Activated CD8-positive, alpha-beta memory T cell treated with anti-CD3 and anti-CD28 coated beads, Interleukin-2, amount 10 ng/mL, durations not matched to agents 7 days and 5 days (primary cell): ENCODE measurements at regions of chr5 and their contacts with region 1.

Region 1: GRCh38 chr5:157471709-157472108 is 11.7 kb downstream of the NIPAL4 start:
- DNase-seq: no peak
- ATAC-seq: peak; percentile 50
- H3K4me3 Mint-ChIP-seq: no peak overlapping the region
- H3K27ac Mint-ChIP-seq: no peak overlapping the region
- H3K4me1 Mint-ChIP-seq: no peaks in the 10 kb centered on the region
- H3K27me3 Mint-ChIP-seq: no peaks in the 10 kb centered on the region

Region 2: DNA sequence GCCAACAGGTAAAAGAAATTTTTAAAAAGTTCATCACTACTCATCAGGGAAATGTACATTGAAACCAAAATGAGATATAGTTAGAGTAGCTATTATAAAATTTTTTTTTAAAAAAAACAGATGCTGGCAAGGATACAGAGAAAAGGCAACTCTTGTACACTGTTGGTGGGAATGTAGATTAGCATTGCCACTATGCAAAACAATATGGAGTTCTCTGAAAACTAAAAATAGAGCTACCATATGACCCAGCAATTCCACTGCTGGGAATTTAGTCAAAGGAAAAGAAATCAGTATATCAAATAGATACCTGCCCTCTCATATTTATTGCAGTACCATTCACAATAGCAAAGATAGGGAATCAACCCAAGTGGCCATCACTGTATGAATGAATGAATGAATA is 55.9 kb before region 1 on chr5:
- CTCF ChIA-PET with region 1: no interaction called
- DNase-seq: no peak
- ATAC-seq: no peak
- H3K4me3 Mint-ChIP-seq: no peak overlapping the region
- H3K27ac Mint-ChIP-seq: no peak overlapping the region
- H3K4me1 Mint-ChIP-seq: no peaks in the 10 kb centered on the region
- H3K27me3 Mint-ChIP-seq: peaks cover 45% of the 10 kb centered on the region

Region 3: GRCh38 chr5:157431544-157432200 is 40.0 kb before region 1 on chr5:
- CTCF ChIA-PET with region 1: interaction called, 18 read pairs
- DNase-seq: peak; percentile 51
- ATAC-seq: peak; percentile 97
- H3K4me3 Mint-ChIP-seq: no peak overlapping the region
- H3K27ac Mint-ChIP-seq: no peak overlapping the region
- H3K4me1 Mint-ChIP-seq: peaks cover 5% of the 10 kb centered on the region
- H3K27me3 Mint-ChIP-seq: peaks cover 20% of the 10 kb centered on the region

Region 4: DNA sequence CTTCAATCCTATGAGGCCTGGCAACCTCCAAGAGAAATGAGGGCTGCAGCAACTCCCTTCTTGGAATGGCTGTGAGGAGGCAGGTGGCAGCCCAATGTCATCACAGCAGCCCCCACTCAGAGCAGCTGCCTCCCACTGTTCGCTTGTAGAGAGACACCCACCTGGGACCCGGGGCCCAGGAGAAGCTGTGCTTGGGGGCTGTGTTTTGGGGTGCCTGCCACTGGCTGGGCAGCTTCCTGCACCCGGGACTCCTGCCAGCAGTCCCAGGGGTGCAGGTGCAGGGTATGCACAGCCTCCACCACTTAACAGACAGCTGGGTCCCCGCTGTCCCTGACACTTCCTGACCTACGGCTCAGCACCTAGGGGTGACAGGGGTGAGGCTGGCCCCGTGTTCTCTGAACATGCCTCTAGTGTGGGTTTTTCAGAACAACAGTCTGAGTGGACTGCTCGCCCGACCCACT is 14.5 kb after region 1 on chr5:
- CTCF ChIA-PET with region 1: interaction called, 11 read pairs
- DNase-seq: no peak
- ATAC-seq: peak; percentile 10
- H3K4me3 Mint-ChIP-seq: no peak overlapping the region
- H3K27ac Mint-ChIP-seq: peak overlapping the region; percentile 77
- H3K4me1 Mint-ChIP-seq: peaks cover 47% of the 10 kb centered on the region
- H3K27me3 Mint-ChIP-seq: no peaks in the 10 kb centered on the region

Region 5: GRCh38 chr5:157511651-157512644 is 40.2 kb after region 1 on chr5:
- CTCF ChIA-PET with region 1: no interaction called
- DNase-seq: no peak
- ATAC-seq: peak; percentile 34
- H3K4me3 Mint-ChIP-seq: no peak overlapping the region
- H3K27ac Mint-ChIP-seq: peak overlapping the region; percentile 14
- H3K4me1 Mint-ChIP-seq: peaks cover 40% of the 10 kb centered on the region
- H3K27me3 Mint-ChIP-seq: no peaks in the 10 kb centered on the region

Region 6: GRCh38 chr5:157799578-157799977 is 327.9 kb after region 1 on chr5:
- CTCF ChIA-PET with region 1: no interaction called
- DNase-seq: no peak
- ATAC-seq: no peak
- H3K4me3 Mint-ChIP-seq: no peak overlapping the region
- H3K27ac Mint-ChIP-seq: no peak overlapping the region
- H3K4me1 Mint-ChIP-seq: no peaks in the 10 kb centered on the region
- H3K27me3 Mint-ChIP-seq: no peaks in the 10 kb centered on the region